ENCODE measurements at regions of chr20 and their contacts with region 1.

Region 1: DNA sequence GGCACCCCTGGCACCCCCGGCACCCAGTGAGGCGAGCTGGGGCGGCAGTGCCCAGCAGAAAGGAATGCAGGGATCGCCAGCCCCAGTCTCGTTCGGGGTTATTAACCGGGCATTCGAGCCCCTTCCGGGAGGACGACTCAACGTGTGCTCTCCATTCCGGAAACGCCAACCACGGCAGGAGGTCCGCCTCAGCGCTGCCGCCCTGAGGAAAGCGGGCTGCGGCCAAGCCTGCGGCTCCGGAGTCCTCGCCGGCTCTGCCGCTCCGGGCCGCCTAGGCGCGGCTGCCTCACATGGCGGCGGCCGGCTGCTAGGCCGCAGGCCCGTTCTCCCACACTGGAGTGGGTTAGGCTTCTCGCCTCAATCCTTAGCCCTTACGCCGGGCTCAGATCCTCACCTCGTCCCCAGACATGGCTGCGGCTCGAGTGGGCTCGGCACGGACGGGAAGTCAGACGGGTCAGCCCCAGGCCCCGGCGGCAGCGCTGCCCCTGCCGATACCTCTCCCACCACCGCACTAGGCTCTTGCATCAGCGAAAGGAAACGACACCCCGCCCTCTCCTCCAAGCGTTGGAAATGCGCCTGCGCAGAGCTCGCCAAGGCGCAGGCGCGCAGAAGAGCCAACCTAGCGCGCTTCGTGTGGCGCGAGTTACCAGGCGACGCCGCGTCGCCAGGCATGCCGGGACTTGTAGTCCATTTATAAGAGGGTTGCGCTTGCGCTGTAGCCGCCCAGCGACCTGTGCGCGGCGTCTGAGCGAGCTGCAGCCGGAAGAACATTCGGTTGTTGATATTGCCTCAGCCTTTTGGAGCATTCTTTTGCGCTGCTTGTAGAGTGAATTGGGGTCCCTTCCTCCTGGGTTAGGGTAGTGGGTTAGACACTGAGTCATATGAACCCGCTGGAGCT is at the start of gene EIF2S2:
- DNase-seq: peak; percentile 99
- H3K4me3 ChIP-seq: peak within 1 kb of the TSS; percentile 94
- H3K27ac ChIP-seq: peak within 1 kb of the TSS; percentile 96
- H3K27me3 ChIP-seq: no peaks in the 10 kb centered on the region
- CTCF ChIP-seq: no peak
- polyA plus RNA-seq, gene EIF2S2: 119 and 161 TPM in 2 replicates

Region 2: GRCh38 chr20:34024723-34025351 is 87.1 kb before region 1 on chr20:
- CTCF ChIA-PET with region 1: no interaction called
- POLR2A ChIA-PET with region 1: no interaction called
- DNase-seq: no peak
- H3K4me3 ChIP-seq: no peak overlapping the region
- H3K27ac ChIP-seq: no peak overlapping the region
- H3K27me3 ChIP-seq: no peaks in the 10 kb centered on the region
- CTCF ChIP-seq: no peak

Region 3: GRCh38 chr20:34096699-34097420 is 15.1 kb before region 1 on chr20:
- CTCF ChIA-PET with region 1: interaction called, 3 read pairs
- POLR2A ChIA-PET with region 1: interaction called, 17 read pairs
- DNase-seq: peak; percentile 33
- H3K4me3 ChIP-seq: no peak overlapping the region
- H3K27ac ChIP-seq: peak overlapping the region; percentile 42
- H3K27me3 ChIP-seq: no peaks in the 10 kb centered on the region
- CTCF ChIP-seq: no peak

Measured in AG04450 (cell line).